Pancreas (tissue), 10 donors: ENCODE measurements at regions of chr6 and their contacts with region 1.

Region 1: GRCh38 chr6:3456755-3457466 is at the start of gene SLC22A23:
- DNase-seq: peak; percentile 85 to 96 (median 90)
- ATAC-seq: peak; percentile 77 to 88 (median 82)
- H3K4me3 ChIP-seq: peak within 1 kb of the TSS; percentile 56 to 80 (median 64)
- H3K27ac ChIP-seq: peak within 1 kb of the TSS in 2 of 4 donors; percentile 22 to 46
- H3K4me1 ChIP-seq: peaks cover 0 to 6% (median 6%) of the 10 kb centered on the region in 3 donors
- H3K27me3 ChIP-seq: no peaks in the 10 kb centered on the region
- CTCF ChIP-seq: peak; percentile 52 to 82 (median 74)
- total RNA-seq, gene SLC22A23: 12.6 to 27.9 (median 15.9) TPM

Region 2: DNA sequence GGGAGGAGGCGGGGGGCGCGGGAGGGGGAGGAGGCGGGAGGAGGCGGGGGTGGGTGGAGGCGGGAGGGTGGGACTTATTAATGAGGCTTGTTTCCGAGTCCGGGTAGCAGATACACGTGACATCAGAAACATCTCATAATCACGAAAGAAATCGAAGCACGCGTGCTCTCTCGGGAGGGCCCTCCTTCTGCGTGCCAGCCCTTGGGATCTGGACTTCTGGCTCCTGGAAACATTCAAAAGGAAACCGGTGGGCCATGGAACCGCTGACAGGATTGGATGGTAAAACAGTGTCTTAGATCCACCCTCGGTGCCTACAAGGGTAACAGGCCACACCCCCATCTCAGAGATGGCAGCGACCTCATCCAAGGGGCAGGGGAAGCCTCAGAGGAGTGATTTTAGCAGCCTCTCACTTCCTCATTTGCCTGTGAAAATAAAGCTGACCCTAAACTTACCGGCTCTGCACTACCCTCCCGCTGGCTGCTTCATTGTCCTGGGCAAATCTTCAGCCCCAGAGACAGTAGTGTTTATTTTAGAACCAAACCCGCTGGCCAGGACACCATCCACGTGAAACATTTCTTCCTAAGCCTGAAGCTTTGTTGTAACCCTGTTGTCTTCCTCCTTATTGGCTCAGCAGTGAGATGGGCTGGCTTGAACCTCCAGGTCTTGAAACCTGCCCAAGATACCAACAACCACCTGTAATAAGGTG is 100.7 kb before region 1 on chr6:
- intact Hi-C with region 1: no loop called
- DNase-seq: peak in 4 of 6 donors; percentile 49 to 81 (median 60)
- ATAC-seq: peak; percentile 34 to 71 (median 56)
- H3K4me3 ChIP-seq: peak overlapping the region in 2 of 4 donors; percentile 21 to 35
- H3K27ac ChIP-seq: peak overlapping the region; percentile 76 to 92 (median 86)
- H3K4me1 ChIP-seq: peaks cover 28 to 47% (median 45%) of the 10 kb centered on the region in 3 donors
- H3K27me3 ChIP-seq: no peaks in the 10 kb centered on the region
- CTCF ChIP-seq: no peak

Region 3: GRCh38 chr6:3732345-3733141 is 275.6 kb after region 1 on chr6:
- intact Hi-C with region 1: loop called in 1 of 3 experiments (anchors 5 kb)
- DNase-seq: peak; percentile 61 to 88 (median 76)
- ATAC-seq: peak; percentile 81 to 96 (median 94)
- H3K4me3 ChIP-seq: no peak overlapping the region
- H3K27ac ChIP-seq: no peak overlapping the region
- H3K4me1 ChIP-seq: peaks cover 0 to 3% (median 2%) of the 10 kb centered on the region in 3 donors
- H3K27me3 ChIP-seq: no peaks in the 10 kb centered on the region
- CTCF ChIP-seq: peak; percentile 52 to 82 (median 80)